K562 (cell line): ENCODE measurements at regions of chr10 and their contacts with region 1.

Region 1: GRCh38 chr10:75029857-75030256 is 81.6 kb upstream of the SAMD8 start:
- DNase-seq: no peak
- ATAC-seq: no peak
- H3K4me3 ChIP-seq: no peak overlapping the region
- H3K27ac ChIP-seq: no peak overlapping the region
- H3K4me1 ChIP-seq: peaks cover 0 to 3% of the 10 kb centered on the region in 2 experiments; a peak in 1 of 5 replicates
- H3K27me3 ChIP-seq: no peaks in the 10 kb centered on the region
- CTCF ChIP-seq: no peak
- EP300 ChIP-seq: no peak
- POLR2A ChIP-seq: no peak
- RAD21 ChIP-seq: no peak

Region 2: DNA sequence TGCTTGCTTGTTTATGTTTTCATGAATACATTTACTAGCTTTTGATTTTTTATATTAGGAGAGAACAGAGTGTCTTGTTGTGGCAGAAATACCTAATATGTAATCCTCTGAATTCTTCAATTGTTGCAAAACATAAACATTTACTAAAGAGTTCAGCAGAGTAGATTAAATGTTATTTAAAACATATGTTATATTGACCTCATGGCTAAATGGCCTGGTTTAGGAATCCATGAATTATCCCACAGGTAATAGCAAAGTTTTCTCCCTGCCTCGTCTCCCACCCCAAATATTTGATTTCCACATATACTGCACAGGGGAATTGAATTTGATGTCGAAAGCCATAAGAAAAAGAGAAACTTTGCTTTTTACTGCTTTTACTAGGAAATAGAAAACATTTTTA is 767.0 kb before region 1 on chr10:
- CTCF ChIA-PET with region 1: no interaction called
- POLR2A ChIA-PET with region 1: no interaction called
- in situ Hi-C with region 1: loop called (anchors 5 kb)
- intact Hi-C with region 1: no loop called
- DNase-seq: no peak
- ATAC-seq: no peak
- H3K4me3 ChIP-seq: no peak overlapping the region
- H3K27ac ChIP-seq: no peak overlapping the region
- H3K4me1 ChIP-seq: no peaks in the 10 kb centered on the region
- H3K27me3 ChIP-seq: no peaks in the 10 kb centered on the region
- CTCF ChIP-seq: no peak
- EP300 ChIP-seq: no peak
- POLR2A ChIP-seq: no peak
- RAD21 ChIP-seq: no peak

Region 3: GRCh38 chr10:74419958-74420375 is 609.9 kb before region 1 on chr10:
- CTCF ChIA-PET with region 1: no interaction called
- POLR2A ChIA-PET with region 1: no interaction called
- in situ Hi-C with region 1: no loop called
- intact Hi-C with region 1: loop called (anchors 10 kb)
- DNase-seq: peak; percentile 19 to 53 (median 44)
- ATAC-seq: peak; percentile 60
- H3K4me3 ChIP-seq: no peak overlapping the region
- H3K27ac ChIP-seq: no peak overlapping the region
- H3K4me1 ChIP-seq: peaks cover 4 to 15% of the 10 kb centered on the region in 2 experiments; a peak in 3 of 5 replicates
- H3K27me3 ChIP-seq: no peaks in the 10 kb centered on the region
- CTCF ChIP-seq: peak in 2 of 3 experiments; percentile 22 to 51; a peak in 2 of 6 replicates
- EP300 ChIP-seq: no peak
- POLR2A ChIP-seq: no peak
- RAD21 ChIP-seq: peak in 1 of 2 experiments; percentile 28; a peak in 1 of 4 replicates